ENCODE measurements at regions of chr16 and their contacts with region 1.

Region 1: DNA sequence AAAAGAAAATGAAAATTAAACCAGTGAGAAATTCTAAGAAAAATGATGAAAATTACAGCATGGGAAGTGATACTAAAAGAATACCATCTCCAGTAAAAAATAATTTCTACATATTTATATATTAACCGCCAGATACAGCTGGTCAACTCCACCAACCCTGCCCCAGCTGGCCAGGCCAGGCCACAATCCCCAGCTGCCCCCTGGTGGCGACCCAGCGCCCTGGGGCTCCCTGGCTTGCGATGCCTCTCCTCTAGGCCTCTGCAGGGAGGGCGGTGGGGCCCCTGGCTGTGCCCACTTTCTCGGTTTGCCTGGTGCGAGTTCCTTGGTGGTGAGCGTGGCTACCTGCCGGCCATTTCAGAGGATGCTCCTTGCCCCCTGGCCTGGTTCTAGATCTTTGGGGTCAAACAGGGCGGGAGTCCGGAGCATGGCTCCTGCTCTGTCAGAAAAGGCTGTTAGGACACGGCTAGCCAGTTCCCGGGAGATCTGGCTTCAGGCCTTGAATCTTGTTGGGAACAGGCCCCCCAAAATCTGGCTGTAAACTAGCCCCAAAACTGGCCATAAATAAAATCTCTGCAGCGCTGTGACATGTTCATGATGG is 14.5 kb downstream of the GLIS2 start:
- DNase-seq: no peak
- H3K4me3 ChIP-seq: no peak overlapping the region
- H3K27ac ChIP-seq: no peak overlapping the region
- H3K4me1 ChIP-seq: peaks cover 12% of the 10 kb centered on the region
- H3K27me3 ChIP-seq: no peaks in the 10 kb centered on the region
- CTCF ChIP-seq: peak; percentile 74

Region 2: GRCh38 chr16:4018391-4018790 is 312.0 kb before region 1 on chr16:
- CTCF ChIA-PET with region 1: no interaction called
- POLR2A ChIA-PET with region 1: no interaction called
- intact Hi-C with region 1: no loop called
- DNase-seq: no peak
- H3K4me3 ChIP-seq: no peak overlapping the region
- H3K27ac ChIP-seq: no peak overlapping the region
- H3K4me1 ChIP-seq: peaks cover 5% of the 10 kb centered on the region
- H3K27me3 ChIP-seq: no peaks in the 10 kb centered on the region
- CTCF ChIP-seq: no peak

Region 3: DNA sequence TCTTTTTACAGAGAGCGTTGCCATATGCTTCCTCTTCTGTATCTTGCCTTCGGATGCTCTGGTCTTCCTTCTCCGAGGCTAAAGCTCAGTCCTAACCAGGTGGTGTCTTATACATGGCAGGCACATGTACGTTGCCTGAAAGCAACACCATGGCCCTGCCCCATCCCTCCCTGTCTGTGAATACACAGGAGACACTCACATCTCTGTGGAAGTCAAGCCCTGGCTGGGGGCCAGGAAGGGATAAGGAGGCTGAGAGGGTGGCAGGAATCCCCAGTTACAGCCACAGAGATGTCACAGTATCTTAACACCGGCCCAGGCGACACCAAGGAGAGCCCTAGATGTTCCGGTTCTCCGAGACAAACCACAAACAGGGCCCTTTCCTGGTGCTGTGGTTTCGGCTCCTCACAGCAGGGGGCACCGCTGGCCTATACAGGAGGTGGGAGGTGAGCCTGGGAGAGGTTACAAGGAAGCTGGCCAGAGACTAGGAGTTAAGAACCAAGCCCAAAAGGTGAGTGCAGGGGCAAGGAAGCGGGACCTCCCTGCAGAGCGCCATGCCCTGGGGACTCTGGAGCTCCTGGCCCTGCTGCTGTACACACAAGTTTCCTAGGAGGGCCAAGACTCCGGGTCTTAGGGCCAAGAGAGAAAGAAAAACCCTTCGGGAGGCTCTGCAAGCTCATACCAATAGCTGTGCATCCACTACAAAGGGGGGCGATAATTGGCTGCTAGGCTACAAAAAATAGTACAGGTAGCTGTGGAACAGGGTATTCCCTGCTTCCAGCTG is 130.2 kb before region 1 on chr16:
- CTCF ChIA-PET with region 1: interaction called, 3 read pairs
- POLR2A ChIA-PET with region 1: no interaction called
- intact Hi-C with region 1: loop called (anchors 10 kb)
- DNase-seq: peak; percentile 46
- H3K4me3 ChIP-seq: no peak overlapping the region
- H3K27ac ChIP-seq: no peak overlapping the region
- H3K4me1 ChIP-seq: no peaks in the 10 kb centered on the region
- H3K27me3 ChIP-seq: no peaks in the 10 kb centered on the region
- CTCF ChIP-seq: peak; percentile 54

Region 4: DNA sequence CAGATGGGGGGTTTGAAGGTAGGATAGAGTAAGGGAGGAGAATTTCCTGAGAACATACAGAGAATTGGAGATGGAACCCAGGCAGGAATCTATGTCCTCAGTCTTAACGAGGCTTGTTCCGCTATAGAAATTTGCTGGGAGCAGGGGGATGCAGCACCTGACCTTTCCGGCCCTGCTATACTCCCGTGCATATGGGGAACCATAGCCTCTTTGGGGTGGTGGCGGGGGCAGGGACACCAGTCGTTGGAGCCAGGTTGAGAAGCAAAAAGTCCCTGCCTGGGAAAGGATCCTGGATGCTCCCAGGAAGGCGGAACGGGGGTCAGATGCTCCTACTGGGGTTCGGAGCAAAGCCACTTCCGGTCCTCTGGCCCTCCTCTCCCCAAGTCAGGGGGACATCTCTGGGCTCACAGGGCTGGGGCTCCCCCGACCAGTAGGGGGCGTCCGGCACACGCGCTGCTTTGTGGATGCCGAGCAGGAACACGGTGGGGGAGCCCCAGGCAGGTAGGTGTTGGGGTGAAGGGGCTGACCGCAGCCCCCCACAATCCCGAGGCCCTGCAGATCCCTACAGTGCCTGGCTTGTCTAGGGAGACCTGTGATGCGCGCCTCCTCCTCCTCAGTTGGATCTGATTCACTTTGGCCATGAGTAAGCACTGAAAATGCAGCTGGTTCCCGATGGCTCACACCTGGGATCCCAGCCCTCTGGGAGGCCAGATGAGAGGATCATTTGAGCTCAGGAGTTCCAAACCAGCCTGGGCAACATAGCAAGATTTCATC is 42.0 kb before region 1 on chr16:
- CTCF ChIA-PET with region 1: interaction called, 5 read pairs
- POLR2A ChIA-PET with region 1: no interaction called
- intact Hi-C with region 1: loop called (anchors 2 kb)
- DNase-seq: peak; percentile 79
- H3K4me3 ChIP-seq: no peak overlapping the region
- H3K27ac ChIP-seq: no peak overlapping the region
- H3K4me1 ChIP-seq: peaks cover 3% of the 10 kb centered on the region
- H3K27me3 ChIP-seq: no peaks in the 10 kb centered on the region
- CTCF ChIP-seq: peak; percentile 98